Activated CD8-positive, alpha-beta T cell treated with anti-CD3 and anti-CD28 coated beads for 36 hours (primary cell): ENCODE measurements at regions of chr19 and their contacts with region 1.

Region 1: GRCh38 chr19:18521885-18522624 is at the start of gene ELL:
- DNase-seq: peak; percentile 100
- ATAC-seq: peak; percentile 93
- H3K4me3 Mint-ChIP-seq: peak within 1 kb of the TSS; percentile 76
- H3K27ac Mint-ChIP-seq: peak within 1 kb of the TSS; percentile 94
- H3K4me1 Mint-ChIP-seq: peaks cover 9% of the 10 kb centered on the region
- H3K27me3 Mint-ChIP-seq: no peaks in the 10 kb centered on the region
- CTCF ChIP-seq: no peak
- total RNA-seq, gene ELL: 20.1 to 21.9 TPM

Region 2: GRCh38 chr19:18460900-18461299 is 61.2 kb before region 1 on chr19:
- CTCF ChIA-PET with region 1: interaction called, 13 read pairs
- POLR2A ChIA-PET with region 1: no interaction called
- intact Hi-C with region 1: no loop called
- DNase-seq: no peak
- ATAC-seq: no peak
- H3K4me3 Mint-ChIP-seq: no peak overlapping the region
- H3K27ac Mint-ChIP-seq: no peak overlapping the region
- H3K4me1 Mint-ChIP-seq: peaks cover 6% of the 10 kb centered on the region
- H3K27me3 Mint-ChIP-seq: no peaks in the 10 kb centered on the region
- CTCF ChIP-seq: no peak

Region 3: GRCh38 chr19:18480006-18480691 is 41.9 kb before region 1 on chr19:
- CTCF ChIA-PET with region 1: interaction called, 12 read pairs
- POLR2A ChIA-PET with region 1: interaction called, 6 read pairs
- intact Hi-C with region 1: no loop called
- DNase-seq: no peak
- ATAC-seq: no peak
- H3K4me3 Mint-ChIP-seq: no peak overlapping the region
- H3K27ac Mint-ChIP-seq: peak overlapping the region; percentile 91
- H3K4me1 Mint-ChIP-seq: peaks cover 77% of the 10 kb centered on the region
- H3K27me3 Mint-ChIP-seq: no peaks in the 10 kb centered on the region
- CTCF ChIP-seq: no peak

Region 4: GRCh38 chr19:18496167-18496979 is 25.7 kb before region 1 on chr19:
- CTCF ChIA-PET with region 1: interaction called, 97 read pairs
- POLR2A ChIA-PET with region 1: no interaction called
- intact Hi-C with region 1: no loop called
- DNase-seq: peak; percentile 80
- ATAC-seq: peak; percentile 93
- H3K4me3 Mint-ChIP-seq: peak overlapping the region; percentile 36
- H3K27ac Mint-ChIP-seq: peak overlapping the region; percentile 83
- H3K4me1 Mint-ChIP-seq: peaks cover 71% of the 10 kb centered on the region
- H3K27me3 Mint-ChIP-seq: no peaks in the 10 kb centered on the region
- CTCF ChIP-seq: no peak

Region 5: DNA sequence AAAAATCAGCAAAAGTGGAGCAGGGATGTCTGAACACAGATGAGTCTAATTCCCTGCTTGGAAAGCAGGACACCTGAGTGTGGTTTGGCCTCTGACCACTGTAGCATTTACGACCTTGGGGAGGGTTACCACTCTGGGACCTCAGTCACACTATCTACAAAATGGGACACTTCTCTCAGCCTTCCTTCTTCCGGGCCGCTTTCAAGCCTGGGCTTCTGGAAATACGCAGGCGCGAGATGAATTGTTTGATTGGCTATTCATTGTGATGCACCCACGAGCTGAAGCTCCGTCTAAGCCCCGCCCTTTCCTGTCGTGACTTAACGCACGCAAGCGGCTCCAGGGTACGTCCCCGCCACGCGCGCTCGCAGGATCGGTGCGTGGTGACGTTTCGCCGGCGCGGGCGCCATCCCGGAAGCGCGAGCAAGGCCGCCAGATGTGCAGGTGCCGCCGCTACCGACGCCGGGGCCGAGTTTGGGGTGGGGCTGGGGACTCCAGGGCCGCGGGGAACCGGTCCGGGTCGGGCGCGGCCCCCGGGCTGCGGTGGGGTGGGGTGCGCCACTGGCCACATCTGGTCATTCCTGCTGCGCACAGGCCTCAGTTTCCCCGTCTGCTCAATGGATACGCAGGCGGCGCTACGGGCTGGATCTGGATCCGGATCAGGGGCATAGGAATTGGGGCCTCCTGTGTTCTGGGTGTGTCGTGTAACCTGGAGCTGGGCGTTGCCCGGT is 35.6 kb after region 1 on chr19 and contains the start of gene KXD1:
- CTCF ChIA-PET with region 1: interaction called, 6 read pairs
- POLR2A ChIA-PET with region 1: interaction called, 6 read pairs
- intact Hi-C with region 1: loop called (anchors 5 kb)
- DNase-seq: peak; percentile 99
- ATAC-seq: peak; percentile 99
- H3K4me3 Mint-ChIP-seq: peak within 1 kb of the TSS; percentile 90
- H3K27ac Mint-ChIP-seq: peak within 1 kb of the TSS; percentile 95
- H3K4me1 Mint-ChIP-seq: peaks cover 15% of the 10 kb centered on the region
- H3K27me3 Mint-ChIP-seq: no peaks in the 10 kb centered on the region
- CTCF ChIP-seq: no peak
- total RNA-seq, gene KXD1: 137 to 142 TPM

Region 6: GRCh38 chr19:18588611-18589379 is 66.7 kb after region 1 on chr19 and contains the start of gene REX1BD:
- CTCF ChIA-PET with region 1: interaction called, 13 read pairs
- POLR2A ChIA-PET with region 1: interaction called, 9 read pairs
- intact Hi-C with region 1: no loop called
- DNase-seq: peak; percentile 94
- ATAC-seq: peak; percentile 75
- H3K4me3 Mint-ChIP-seq: peak within 1 kb of the TSS; percentile 82
- H3K27ac Mint-ChIP-seq: peak within 1 kb of the TSS; percentile 90
- H3K4me1 Mint-ChIP-seq: peaks cover 32% of the 10 kb centered on the region
- H3K27me3 Mint-ChIP-seq: no peaks in the 10 kb centered on the region
- CTCF ChIP-seq: peak; percentile 88
- total RNA-seq, gene REX1BD: 61.2 to 65.1 TPM

Region 7: DNA sequence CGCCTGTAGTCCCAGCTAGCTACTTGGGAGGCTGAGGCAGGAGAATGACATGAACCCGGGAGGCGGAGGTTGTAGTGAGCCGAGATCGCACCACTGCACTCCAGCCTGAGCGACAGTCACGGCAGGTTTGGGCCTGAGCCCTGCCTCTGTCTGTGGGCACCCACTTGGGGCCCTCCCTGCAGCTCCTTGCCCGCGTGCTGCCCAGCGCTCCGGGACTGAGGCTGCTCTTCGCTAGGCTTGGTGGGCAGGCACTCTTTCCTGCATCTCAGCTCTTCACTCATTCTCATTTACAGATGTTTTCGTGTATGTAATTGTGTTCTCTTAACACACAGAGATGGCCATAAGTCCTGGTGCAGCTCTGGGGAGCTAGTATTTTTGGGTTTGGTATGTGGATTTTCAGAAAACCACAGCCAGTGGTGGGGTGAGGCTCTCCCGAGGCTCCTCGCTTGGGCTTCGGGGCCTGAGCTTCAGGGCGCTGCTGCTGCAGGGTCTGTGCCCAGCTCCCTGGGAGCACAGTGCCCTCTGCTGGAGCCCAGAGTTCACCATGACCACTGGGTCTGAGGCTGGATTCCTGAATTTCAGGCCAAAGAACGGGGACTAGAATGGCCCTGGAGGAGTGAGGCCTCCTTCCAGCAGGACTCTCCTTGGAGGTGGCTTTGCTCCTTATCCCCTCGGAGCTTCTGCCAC is 324.9 kb after region 1 on chr19:
- CTCF ChIA-PET with region 1: interaction called, 16 read pairs
- POLR2A ChIA-PET with region 1: no interaction called
- intact Hi-C with region 1: no loop called
- DNase-seq: peak; percentile 81
- ATAC-seq: peak; percentile 74
- H3K4me3 Mint-ChIP-seq: no peak overlapping the region
- H3K27ac Mint-ChIP-seq: peak overlapping the region; percentile 16
- H3K4me1 Mint-ChIP-seq: peaks cover 64% of the 10 kb centered on the region
- H3K27me3 Mint-ChIP-seq: no peaks in the 10 kb centered on the region
- CTCF ChIP-seq: peak; percentile 77